Activated naive CD4-positive, alpha-beta T cell treated with anti-CD3 and anti-CD28 coated beads for 36 hours (primary cell): ENCODE measurements at regions of chr17 and their contacts with region 1.

Region 1: DNA sequence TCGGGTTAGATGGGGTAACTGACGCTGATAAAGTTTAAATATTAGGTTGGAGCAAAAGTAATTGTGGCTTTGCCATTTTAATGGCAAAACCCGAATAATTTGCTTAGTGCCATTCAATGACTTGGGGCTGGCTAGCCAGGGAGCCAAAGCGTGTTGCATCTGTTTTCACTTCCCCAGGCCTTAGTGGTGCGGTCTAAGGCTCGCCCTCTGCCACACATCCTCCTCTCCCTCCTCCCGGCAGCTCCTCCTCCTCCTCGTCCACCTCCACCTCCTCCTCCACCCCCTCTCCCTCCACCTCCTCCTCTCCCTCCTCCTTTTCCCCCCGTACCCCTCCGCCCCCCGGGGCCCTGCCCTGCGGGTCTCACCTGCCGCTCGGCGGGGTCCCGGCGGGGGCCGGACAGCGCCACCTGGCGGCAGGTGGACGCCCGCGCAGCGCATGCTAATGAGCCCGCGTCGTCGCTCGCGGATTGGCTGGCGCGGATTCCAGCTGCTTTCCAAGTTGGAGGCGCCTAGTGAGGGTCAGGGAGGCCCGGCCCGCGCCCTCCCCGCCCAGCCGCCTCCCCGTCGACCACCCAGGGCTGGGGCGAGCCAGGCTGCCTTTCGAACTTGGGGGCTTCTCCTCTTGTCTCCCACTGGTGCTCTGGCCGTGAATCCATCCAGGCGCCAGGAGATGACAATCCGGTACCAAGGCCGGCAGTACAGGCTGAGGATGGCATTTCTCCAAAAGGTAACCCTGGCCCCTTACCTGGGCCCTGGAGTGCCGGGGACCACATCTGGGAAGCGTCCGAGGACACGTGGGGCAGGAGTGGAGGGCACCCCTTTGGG is 36.6 kb upstream of the RGS9 start:
- DNase-seq: peak; percentile 74
- H3K4me3 Mint-ChIP-seq: peak overlapping the region; percentile 86
- H3K27ac Mint-ChIP-seq: peak overlapping the region; percentile 95
- H3K4me1 Mint-ChIP-seq: peaks cover 16% of the 10 kb centered on the region
- H3K27me3 Mint-ChIP-seq: no peaks in the 10 kb centered on the region

Region 2: GRCh38 chr17:64968652-64969501 is 131.7 kb before region 1 on chr17:
- CTCF ChIA-PET with region 1: interaction called, 32 read pairs
- intact Hi-C with region 1: loop called (anchors 1 kb)
- DNase-seq: peak; percentile 34
- H3K4me3 Mint-ChIP-seq: no peak overlapping the region
- H3K27ac Mint-ChIP-seq: peak overlapping the region; percentile 75
- H3K4me1 Mint-ChIP-seq: peaks cover 69% of the 10 kb centered on the region
- H3K27me3 Mint-ChIP-seq: no peaks in the 10 kb centered on the region

Region 3: GRCh38 chr17:64984851-64985521 is 115.5 kb before region 1 on chr17:
- CTCF ChIA-PET with region 1: interaction called, 4 read pairs
- intact Hi-C with region 1: loop called (anchors 1 kb)
- DNase-seq: peak; percentile 50
- H3K4me3 Mint-ChIP-seq: peak overlapping the region; percentile 73
- H3K27ac Mint-ChIP-seq: peak overlapping the region; percentile 95
- H3K4me1 Mint-ChIP-seq: peaks cover 32% of the 10 kb centered on the region
- H3K27me3 Mint-ChIP-seq: no peaks in the 10 kb centered on the region

Region 4: DNA sequence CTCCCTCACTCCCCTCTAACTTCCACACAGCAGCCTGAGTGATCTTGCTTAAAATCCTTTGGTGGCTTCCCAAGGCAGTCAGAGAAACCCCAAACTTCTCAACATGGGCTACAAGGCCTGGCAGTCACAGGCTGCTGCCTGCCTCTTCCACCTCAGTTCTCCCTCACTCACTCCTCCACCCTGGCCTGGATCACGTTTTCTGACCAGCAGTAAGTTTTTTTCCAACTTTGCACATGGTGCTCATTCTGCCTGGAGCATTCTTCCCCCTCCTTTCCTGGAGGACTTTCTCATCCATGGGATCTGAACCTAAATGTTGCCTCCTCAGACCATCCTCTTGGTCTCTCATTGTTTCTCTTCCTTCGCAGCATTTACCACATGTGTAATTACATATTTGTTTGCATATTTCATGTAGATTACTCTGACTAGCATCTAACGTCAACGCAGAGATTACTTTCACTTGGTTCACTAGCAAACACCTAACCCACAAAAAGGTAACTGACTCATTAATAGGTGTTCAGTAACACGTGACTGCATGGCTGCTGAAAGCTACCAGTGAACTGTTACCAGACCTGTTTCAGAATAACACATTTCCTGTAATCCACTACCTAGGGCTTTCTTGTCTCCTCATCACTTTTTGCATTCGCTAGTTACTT is 61.1 kb before region 1 on chr17:
- CTCF ChIA-PET with region 1: no interaction called
- intact Hi-C with region 1: loop called (anchors 1 kb)
- DNase-seq: peak; percentile 70
- H3K4me3 Mint-ChIP-seq: peak overlapping the region; percentile 39
- H3K27ac Mint-ChIP-seq: peak overlapping the region; percentile 89
- H3K4me1 Mint-ChIP-seq: peaks cover 80% of the 10 kb centered on the region
- H3K27me3 Mint-ChIP-seq: no peaks in the 10 kb centered on the region

Region 5: DNA sequence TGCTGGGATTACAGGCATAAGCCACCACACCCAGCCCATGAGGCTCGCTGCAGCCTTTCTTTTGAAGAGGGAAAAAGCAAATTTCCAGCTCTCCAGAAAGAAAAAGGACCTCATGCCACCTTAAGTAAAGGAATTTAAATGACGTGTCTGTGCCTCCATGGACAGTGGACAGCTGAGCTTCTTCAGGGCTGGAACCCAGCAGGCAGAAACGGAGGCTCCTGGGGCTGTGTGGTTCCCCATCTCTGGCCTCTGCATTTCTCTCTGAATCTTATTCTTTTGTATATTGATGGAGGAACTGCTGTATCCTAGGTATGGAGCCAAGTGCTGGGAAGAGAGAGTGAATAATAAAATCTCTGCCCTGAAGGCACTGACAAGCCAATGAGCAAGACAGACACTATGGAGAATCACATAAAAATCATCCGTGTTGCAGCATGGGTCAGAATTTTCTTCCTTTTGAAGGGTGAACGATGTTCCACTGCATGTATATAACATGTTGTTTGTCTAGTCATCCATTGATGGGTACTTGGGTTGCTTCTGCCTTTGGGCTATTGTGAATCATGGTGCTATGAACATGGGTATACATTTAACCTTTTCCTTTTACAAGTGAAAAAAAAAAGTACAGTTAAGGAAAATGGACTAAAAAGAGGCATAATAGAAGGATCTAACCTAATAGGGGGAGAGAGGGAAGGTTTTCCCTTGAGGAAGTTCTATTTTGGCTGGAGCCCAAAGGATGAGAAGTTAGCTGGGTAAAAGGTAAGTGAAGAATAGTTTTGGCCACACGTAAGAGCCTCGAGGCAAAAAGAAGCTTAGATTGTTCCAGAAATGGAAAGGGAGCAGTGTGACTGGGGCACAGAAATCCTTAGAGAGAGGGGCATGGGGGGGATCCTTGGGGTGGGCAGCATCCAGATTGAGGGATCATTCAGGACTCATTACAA is 11.8 kb before region 1 on chr17:
- CTCF ChIA-PET with region 1: interaction called, 12 read pairs
- intact Hi-C with region 1: no loop called
- DNase-seq: no peak
- H3K4me3 Mint-ChIP-seq: no peak overlapping the region
- H3K27ac Mint-ChIP-seq: no peak overlapping the region
- H3K4me1 Mint-ChIP-seq: no peaks in the 10 kb centered on the region
- H3K27me3 Mint-ChIP-seq: no peaks in the 10 kb centered on the region

Region 6: GRCh38 chr17:65198653-65199382 is 98.3 kb after region 1 on chr17:
- CTCF ChIA-PET with region 1: interaction called, 8 read pairs
- intact Hi-C with region 1: loop called (anchors 1 kb)
- DNase-seq: no peak
- H3K4me3 Mint-ChIP-seq: no peak overlapping the region
- H3K27ac Mint-ChIP-seq: no peak overlapping the region
- H3K4me1 Mint-ChIP-seq: peaks cover 8% of the 10 kb centered on the region
- H3K27me3 Mint-ChIP-seq: no peaks in the 10 kb centered on the region

Region 7: DNA sequence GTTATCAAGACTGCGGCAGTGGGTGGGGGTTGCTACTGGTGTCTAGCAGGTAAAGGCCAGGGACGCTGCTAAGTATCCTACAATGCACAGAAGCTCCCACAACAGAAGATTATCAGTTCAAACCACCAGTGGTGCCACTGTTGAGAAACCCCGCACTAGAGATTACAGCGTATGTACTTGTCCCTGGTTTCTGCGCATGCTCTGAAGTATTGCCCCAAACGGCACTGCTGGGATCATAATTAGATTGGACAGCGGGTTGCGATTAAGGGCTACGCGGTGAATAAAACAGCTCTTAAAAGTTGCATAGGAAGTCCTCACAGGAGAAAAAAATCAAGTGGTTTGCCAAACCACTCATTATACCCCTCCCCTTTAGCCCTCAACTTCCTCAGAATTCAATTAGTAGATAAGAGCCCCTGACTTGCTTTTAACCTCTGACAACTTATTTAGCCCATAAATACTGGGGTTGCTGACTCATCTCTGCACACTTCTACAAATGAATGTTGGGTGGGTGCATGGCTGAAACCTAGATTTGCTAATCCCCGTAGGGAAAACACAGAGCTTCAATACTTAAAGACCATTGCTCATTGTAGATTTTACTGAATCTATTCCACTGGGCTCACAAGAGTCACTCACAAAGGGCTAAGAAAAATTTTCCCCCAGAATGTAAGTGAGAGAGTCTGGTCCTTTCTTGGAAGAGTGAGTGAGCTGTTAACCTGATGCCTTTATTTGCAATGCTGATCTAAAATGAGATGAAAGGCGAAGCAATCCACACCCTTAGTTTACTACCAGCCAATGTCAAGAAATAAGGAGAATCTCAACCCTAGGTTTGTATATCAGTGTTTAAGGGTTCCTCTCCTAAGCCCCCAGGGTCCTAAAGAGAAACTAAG is 128.4 kb after region 1 on chr17:
- CTCF ChIA-PET with region 1: no interaction called
- intact Hi-C with region 1: no loop called
- DNase-seq: peak; percentile 74
- H3K4me3 Mint-ChIP-seq: no peak overlapping the region
- H3K27ac Mint-ChIP-seq: peak overlapping the region; percentile 57
- H3K4me1 Mint-ChIP-seq: peaks cover 27% of the 10 kb centered on the region
- H3K27me3 Mint-ChIP-seq: peaks cover 16% of the 10 kb centered on the region

Region 8: DNA sequence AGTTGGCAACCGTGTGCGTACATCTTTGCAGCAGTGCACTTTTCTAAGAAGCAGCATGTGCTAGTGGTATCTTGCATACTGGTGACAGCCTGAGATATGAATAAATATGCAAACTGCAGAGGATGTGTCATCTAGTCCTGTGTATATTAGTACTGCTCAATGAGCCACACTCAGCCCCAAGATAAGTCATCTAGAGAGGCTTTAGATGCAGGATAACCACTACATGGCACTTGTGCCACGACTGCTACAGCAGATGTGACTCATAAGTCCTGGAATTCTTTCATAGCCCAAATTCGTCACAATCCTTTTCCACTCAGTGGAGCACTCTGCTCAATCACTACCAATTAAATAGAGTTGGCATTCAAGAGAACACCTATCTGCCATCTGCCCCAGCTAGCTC is 289.4 kb after region 1 on chr17:
- CTCF ChIA-PET with region 1: no interaction called
- intact Hi-C with region 1: no loop called
- DNase-seq: no peak
- H3K4me3 Mint-ChIP-seq: no peak overlapping the region
- H3K27ac Mint-ChIP-seq: no peak overlapping the region
- H3K4me1 Mint-ChIP-seq: peaks cover 17% of the 10 kb centered on the region
- H3K27me3 Mint-ChIP-seq: no peaks in the 10 kb centered on the region